ENCODE measurements at regions of chr1 and their contacts with region 1.

Region 1: GRCh38 chr1:38608202-38608864 is 251.2 kb downstream of the RRAGC start:
- DNase-seq: peak in 1 of 10 donors; percentile 41

Region 2: GRCh38 chr1:38818175-38818976 is 210.0 kb after region 1 on chr1:
- intact Hi-C with region 1: loop called (anchors 5 kb)
- DNase-seq: peak in 5 of 10 donors; percentile 21 to 86 (median 52)